ENCODE measurements at regions of chr1 and their contacts with region 1.

Region 1: DNA sequence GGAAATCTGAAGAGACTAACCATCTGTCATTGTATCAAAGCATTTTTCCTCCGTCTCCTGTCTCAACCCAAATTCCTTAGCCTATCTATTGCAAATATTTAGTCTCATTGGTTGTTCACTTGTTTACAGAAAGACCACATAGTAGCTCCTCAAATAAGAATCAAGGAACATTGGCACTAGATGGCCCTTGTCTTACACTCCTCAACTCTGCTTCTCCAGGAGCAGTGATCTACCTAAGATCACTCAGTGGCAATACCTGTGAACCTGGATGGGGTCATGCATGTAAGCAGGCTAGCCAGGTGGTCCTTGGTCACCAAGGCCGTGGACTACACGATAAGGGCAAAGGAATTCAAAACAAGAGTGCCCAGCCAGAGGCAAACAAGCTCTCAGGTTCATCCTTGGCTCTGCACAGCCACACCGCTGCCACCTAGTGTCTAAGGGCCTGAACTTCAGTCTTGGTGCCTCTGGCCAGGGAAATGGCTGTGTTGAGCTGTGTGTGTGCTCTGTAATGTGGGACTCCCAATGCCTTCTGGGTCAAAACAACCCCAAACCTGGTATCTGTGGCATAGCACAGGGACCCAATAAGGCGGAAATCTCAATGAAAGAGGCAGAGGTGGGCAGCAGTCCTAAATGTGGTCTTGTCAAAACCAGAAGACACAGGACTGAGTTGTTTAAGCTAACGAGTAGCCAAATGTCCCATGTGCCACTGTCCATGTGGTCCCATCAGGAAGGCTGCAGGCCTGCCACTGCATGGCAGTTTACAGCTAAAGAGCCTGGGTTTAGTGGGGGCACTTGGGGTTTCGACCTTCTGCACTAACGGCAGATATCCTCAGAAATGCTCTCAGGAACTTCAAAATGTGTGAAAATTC is 54.5 kb downstream of the GPR161 start:
- DNase-seq: peak; percentile 61 to 76 (median 71)
- H3K4me3 ChIP-seq: no peak overlapping the region
- H3K27ac ChIP-seq: no peak overlapping the region
- H3K4me1 ChIP-seq: peaks cover 10% of the 10 kb centered on the region
- H3K27me3 ChIP-seq: no peaks in the 10 kb centered on the region
- CTCF ChIP-seq: peak; percentile 55 to 77 (median 58)
- EP300 ChIP-seq: no peak
- POLR2A ChIP-seq: no peak

Region 2: GRCh38 chr1:168136709-168137514 is 54.7 kb after region 1 on chr1 and contains the start of gene GPR161:
- intact Hi-C with region 1: loop called in 1 of 4 experiments (anchors 10 kb)
- DNase-seq: peak; percentile 70 to 82 (median 74)
- H3K4me3 ChIP-seq: peak within 1 kb of the TSS; percentile 92
- H3K27ac ChIP-seq: peak within 1 kb of the TSS; percentile 87
- H3K4me1 ChIP-seq: peaks cover 6% of the 10 kb centered on the region
- H3K27me3 ChIP-seq: no peaks in the 10 kb centered on the region
- CTCF ChIP-seq: no peak
- EP300 ChIP-seq: no peak
- POLR2A ChIP-seq: no peak
- total RNA-seq, gene GPR161: 7.4 to 23.4 (median 19.1) TPM

Measured in ovary (tissue), 10 donors.